Caco-2 (cell line): ENCODE measurements at regions of chr9 and their contacts with region 1.

Region 1: GRCh38 chr9:135343837-135344522 is 135.6 kb upstream of the PPP1R26 start:
- DNase-seq: peak; percentile 55 to 81
- H3K4me3 ChIP-seq: no peak overlapping the region
- H3K4me3 Mint-ChIP-seq: no peak overlapping the region
- H3K27ac Mint-ChIP-seq: no peak overlapping the region
- H3K4me1 ChIP-seq: no peaks in the 10 kb centered on the region
- H3K4me1 Mint-ChIP-seq: no peaks in the 10 kb centered on the region
- H3K27me3 ChIP-seq: peaks cover 2% of the 10 kb centered on the region; the same call in 1 of the 2 replicates
- H3K27me3 Mint-ChIP-seq: peaks cover 14% of the 10 kb centered on the region
- CTCF ChIP-seq: peak; percentile 86 to 92

Region 2: DNA sequence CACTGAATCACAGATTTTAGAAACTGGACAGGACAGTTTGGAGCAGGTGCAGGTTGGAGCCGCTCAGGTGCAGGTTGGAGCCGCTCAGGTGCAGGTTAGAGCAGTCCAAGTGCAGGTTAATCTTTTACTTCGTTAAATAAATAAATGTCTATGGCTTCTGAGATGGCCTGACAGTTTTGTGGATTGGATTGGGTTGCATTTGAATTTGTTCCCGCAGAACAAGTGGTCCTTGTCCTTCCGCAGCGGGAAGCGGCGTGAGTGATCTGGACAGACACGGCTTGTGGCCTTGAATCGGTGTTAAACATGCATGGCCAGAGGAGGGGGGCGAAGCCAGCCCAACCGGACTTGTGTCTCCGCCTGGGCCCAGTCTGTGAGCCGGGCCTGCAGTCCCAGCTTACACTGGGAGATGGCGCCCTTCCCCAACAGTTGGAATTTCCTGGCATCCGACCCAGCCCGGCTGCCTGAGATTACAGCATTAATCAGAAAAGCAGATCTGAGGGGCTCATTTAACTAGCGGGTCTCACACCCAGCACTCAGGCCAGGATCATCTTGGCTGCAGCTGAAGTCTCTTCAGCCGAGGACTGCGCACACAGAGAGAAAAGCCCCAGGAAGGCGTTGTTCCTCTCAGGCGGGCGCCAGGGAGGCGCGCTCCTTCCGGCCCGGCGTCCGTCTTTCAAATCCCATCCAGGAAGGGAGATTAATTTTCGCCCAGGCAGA is 258.0 kb before region 1 on chr9:
- CTCF ChIA-PET with region 1: no interaction called
- POLR2A ChIA-PET with region 1: no interaction called
- intact Hi-C with region 1: loop called (anchors 1 kb)
- DNase-seq: peak; percentile 75 to 80
- H3K4me3 ChIP-seq: no peak overlapping the region
- H3K4me3 Mint-ChIP-seq: peak overlapping the region; percentile 18
- H3K27ac Mint-ChIP-seq: no peak overlapping the region
- H3K4me1 ChIP-seq: no peaks in the 10 kb centered on the region
- H3K4me1 Mint-ChIP-seq: peaks cover 7% of the 10 kb centered on the region
- H3K27me3 ChIP-seq: no peaks in the 10 kb centered on the region
- H3K27me3 Mint-ChIP-seq: peaks cover 20% of the 10 kb centered on the region
- CTCF ChIP-seq: peak; percentile 78 to 92

Region 3: DNA sequence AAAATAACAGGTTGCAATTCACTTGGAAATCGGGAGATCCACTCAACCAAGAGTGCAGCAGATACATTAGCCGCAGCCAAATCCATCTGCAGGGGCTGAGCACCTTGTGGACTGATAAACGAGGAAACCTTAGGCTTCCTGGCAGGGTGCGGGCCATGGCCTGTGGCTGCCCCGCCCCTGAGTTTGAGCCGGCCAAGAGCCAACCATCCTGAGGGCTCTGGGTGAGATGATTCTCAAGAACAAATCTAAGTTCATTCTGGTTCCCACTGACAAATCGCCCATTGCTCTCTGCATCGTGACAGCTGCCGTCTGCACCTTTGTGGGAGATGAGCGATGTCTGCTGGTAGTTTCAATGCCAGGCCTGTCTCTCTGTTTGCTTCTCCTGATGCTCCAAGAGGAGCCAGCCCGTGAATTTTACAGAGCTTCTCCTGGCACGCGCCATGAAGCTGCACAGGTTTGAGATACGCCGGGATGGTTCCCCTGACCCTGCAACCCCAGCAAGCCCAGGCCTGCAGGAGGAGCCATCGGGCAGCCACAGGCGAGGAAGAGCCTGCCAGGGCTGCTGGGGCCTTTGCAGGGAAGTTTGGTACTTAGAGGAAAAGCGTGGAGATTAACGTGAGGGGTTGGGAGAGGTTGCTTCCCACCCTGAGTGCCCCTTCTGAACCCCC is 102.5 kb before region 1 on chr9:
- CTCF ChIA-PET with region 1: no interaction called
- POLR2A ChIA-PET with region 1: no interaction called
- intact Hi-C with region 1: loop called (anchors 10 kb)
- DNase-seq: peak in 1 of 2 experiments; percentile 15
- H3K4me3 ChIP-seq: no peak overlapping the region
- H3K4me3 Mint-ChIP-seq: no peak overlapping the region
- H3K27ac Mint-ChIP-seq: no peak overlapping the region
- H3K4me1 ChIP-seq: peaks cover 8% of the 10 kb centered on the region; the same call in 1 of the 2 replicates
- H3K4me1 Mint-ChIP-seq: no peaks in the 10 kb centered on the region
- H3K27me3 ChIP-seq: no peaks in the 10 kb centered on the region
- H3K27me3 Mint-ChIP-seq: peaks cover 23% of the 10 kb centered on the region
- CTCF ChIP-seq: peak in 1 of 2 experiments; percentile 21

Region 4: DNA sequence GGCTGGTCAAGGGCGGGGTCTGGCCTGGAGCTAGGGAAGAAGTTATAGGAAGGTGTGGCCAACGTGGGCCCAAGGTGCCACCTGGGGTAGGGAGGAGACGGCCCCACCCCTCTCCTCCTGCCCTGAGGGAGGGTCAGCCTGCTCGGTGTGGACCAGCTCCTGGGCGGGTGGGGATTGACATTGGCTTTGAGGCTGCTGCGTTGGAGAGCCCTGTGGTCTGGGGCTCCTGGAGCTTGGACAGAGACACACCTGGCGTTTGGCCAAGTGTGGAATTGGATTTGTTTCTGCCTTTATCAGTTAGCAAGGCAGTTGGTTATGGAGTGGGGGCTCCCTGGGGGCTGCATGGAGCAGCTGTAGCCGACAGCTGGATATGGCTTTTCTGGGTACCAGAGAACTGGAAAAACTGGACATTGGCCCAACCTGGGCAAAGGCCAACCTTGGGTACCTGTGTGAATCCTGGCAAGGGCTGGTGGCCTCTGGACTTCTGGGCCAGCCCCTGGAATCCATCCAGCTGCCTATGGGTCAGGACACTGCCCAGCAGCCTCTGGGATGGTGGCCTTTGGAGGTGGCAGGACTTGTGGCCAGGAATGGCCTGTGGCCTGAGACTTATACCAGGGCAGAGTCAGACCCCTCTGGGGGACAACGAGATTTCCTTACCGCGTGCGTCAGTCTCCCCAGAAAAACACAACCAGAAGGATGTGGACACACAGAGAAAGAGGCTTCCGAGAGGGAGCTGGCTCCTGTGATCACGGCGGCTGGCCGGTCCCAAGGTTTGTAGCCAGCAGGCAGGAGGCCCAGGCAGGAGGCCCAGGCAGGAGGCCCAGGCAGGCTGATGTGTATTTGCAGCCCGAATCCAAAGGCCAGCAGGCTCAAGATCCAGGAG is 60.1 kb after region 1 on chr9:
- CTCF ChIA-PET with region 1: no interaction called
- POLR2A ChIA-PET with region 1: no interaction called
- intact Hi-C with region 1: loop called (anchors 10 kb)
- DNase-seq: no peak
- H3K4me3 ChIP-seq: no peak overlapping the region
- H3K4me3 Mint-ChIP-seq: no peak overlapping the region
- H3K27ac Mint-ChIP-seq: no peak overlapping the region
- H3K4me1 ChIP-seq: no peaks in the 10 kb centered on the region
- H3K4me1 Mint-ChIP-seq: no peaks in the 10 kb centered on the region
- H3K27me3 ChIP-seq: no peaks in the 10 kb centered on the region
- H3K27me3 Mint-ChIP-seq: peaks cover 6% of the 10 kb centered on the region
- CTCF ChIP-seq: no peak